Activated CD4-positive, alpha-beta T cell treated with anti-CD3 and anti-CD28 coated beads for 36 hours (primary cell): ENCODE measurements at regions of chr1 and their contacts with region 1.

Region 1: GRCh38 chr1:39609618-39610331 is 29.7 kb downstream of the HEYL start:
- DNase-seq: peak; percentile 92
- ATAC-seq: peak; percentile 92
- H3K4me3 Mint-ChIP-seq: no peak overlapping the region
- H3K27ac Mint-ChIP-seq: no peak overlapping the region
- H3K4me1 Mint-ChIP-seq: peaks cover 9% of the 10 kb centered on the region
- H3K27me3 Mint-ChIP-seq: no peaks in the 10 kb centered on the region

Region 2: DNA sequence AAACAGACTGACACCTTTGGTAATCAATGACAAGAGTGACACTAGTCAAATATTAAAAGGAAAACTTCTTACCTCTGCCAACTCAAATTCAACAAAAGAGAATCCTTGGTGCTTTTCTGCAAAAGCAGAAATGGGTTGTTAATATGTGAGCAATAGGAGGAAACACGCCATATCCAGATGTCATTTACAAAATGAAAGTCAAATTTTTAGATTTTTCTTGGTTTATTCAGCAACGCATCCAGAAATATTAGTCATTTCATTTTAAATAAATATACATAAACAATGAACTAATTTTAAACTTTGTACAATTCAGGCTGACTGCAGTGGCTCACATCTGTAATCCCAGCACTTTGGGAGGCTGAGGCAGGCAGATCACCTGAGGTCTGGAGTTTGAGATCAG is 55.5 kb before region 1 on chr1:
- CTCF ChIA-PET with region 1: no interaction called
- POLR2A ChIA-PET with region 1: no interaction called
- intact Hi-C with region 1: no loop called
- DNase-seq: no peak
- ATAC-seq: no peak
- H3K4me3 Mint-ChIP-seq: no peak overlapping the region
- H3K27ac Mint-ChIP-seq: no peak overlapping the region
- H3K4me1 Mint-ChIP-seq: peaks cover 7% of the 10 kb centered on the region
- H3K27me3 Mint-ChIP-seq: no peaks in the 10 kb centered on the region

Region 3: GRCh38 chr1:39575191-39576015 is 34.4 kb before region 1 on chr1:
- CTCF ChIA-PET with region 1: interaction called, 11 read pairs
- POLR2A ChIA-PET with region 1: interaction called, 6 read pairs
- intact Hi-C with region 1: no loop called
- DNase-seq: peak; percentile 69
- ATAC-seq: peak; percentile 40
- H3K4me3 Mint-ChIP-seq: peak overlapping the region; percentile 90
- H3K27ac Mint-ChIP-seq: peak overlapping the region; percentile 90
- H3K4me1 Mint-ChIP-seq: peaks cover 42% of the 10 kb centered on the region
- H3K27me3 Mint-ChIP-seq: no peaks in the 10 kb centered on the region

Region 4: GRCh38 chr1:39623053-39623452 is 13.3 kb after region 1 on chr1:
- CTCF ChIA-PET with region 1: interaction called, 11 read pairs
- POLR2A ChIA-PET with region 1: no interaction called
- intact Hi-C with region 1: no loop called
- DNase-seq: no peak
- ATAC-seq: no peak
- H3K4me3 Mint-ChIP-seq: no peak overlapping the region
- H3K27ac Mint-ChIP-seq: no peak overlapping the region
- H3K4me1 Mint-ChIP-seq: no peaks in the 10 kb centered on the region
- H3K27me3 Mint-ChIP-seq: peaks cover 5% of the 10 kb centered on the region

Region 5: DNA sequence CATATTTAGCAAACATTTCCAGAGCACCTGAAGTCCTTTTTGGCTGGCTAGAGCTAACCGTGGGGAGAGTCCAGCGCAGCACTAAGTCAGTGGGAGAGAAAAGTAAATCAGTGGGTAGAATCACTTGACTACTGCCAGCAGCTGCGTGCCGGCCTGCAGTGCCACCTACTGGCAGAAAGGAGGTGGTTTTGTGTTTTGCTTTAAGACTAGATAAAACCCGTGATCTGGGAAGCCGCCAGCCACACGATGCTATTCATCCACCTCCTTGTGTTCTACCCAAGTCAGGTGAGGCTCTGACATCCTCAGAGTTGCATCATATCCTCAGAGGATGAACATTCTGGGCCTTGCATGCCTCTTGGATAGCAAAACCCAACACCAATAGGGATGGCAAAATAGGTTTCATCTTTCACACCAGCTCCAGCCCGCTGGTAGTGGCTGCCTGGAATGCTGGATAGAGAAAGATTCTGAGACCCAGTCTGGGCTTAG is 43.8 kb after region 1 on chr1:
- CTCF ChIA-PET with region 1: interaction called, 339 read pairs
- POLR2A ChIA-PET with region 1: interaction called, 5 read pairs
- intact Hi-C with region 1: loop called (anchors 1 kb)
- DNase-seq: peak; percentile 89
- ATAC-seq: peak; percentile 82
- H3K4me3 Mint-ChIP-seq: no peak overlapping the region
- H3K27ac Mint-ChIP-seq: peak overlapping the region; percentile 26
- H3K4me1 Mint-ChIP-seq: peaks cover 8% of the 10 kb centered on the region
- H3K27me3 Mint-ChIP-seq: peaks cover 3% of the 10 kb centered on the region

Region 6: DNA sequence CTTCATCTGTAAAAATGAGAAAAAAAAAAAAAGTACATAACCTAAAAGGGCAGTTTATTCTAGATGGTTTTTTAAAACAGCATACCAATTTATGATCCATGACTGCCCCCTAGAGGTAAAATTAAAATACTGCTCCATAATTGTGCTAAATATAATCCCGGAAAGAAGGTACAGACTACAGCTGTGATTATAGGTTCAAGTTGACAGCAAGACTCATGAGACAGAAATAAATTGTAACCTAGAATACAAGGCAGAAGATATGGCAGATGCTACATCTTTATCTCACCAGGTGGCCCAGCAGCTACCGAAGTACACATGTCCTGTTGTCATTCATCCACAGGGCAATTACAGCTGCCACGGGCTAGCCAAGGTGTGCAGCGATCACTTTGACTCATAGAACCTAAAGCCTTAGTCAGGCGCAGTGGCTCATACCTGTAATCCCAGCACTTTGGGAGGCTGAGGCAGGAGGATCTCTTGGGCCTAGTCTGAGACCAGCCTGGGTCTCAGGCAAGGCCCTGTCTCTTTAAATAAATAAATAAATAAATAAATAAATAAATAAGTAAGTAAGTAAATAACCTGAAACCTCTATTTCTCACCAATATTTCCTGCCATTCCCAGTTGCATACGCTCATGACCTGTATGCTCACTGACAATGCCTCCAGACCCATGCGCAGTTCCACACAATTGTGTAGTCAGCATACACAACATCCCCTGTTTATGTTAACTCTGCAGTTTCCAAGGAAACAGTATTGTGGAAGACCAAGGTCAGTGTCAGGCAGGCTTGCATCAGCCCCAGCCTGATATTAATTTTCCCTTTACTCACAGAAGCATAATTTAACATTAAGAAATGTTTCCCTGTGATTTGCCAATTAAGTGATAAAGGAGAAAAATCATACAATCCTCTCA is 110.6 kb after region 1 on chr1:
- CTCF ChIA-PET with region 1: interaction called, 29 read pairs
- POLR2A ChIA-PET with region 1: no interaction called
- intact Hi-C with region 1: loop called (anchors 1 kb)
- DNase-seq: no peak
- ATAC-seq: peak; percentile 73
- H3K4me3 Mint-ChIP-seq: no peak overlapping the region
- H3K27ac Mint-ChIP-seq: no peak overlapping the region
- H3K4me1 Mint-ChIP-seq: no peaks in the 10 kb centered on the region
- H3K27me3 Mint-ChIP-seq: peaks cover 38% of the 10 kb centered on the region

Region 7: DNA sequence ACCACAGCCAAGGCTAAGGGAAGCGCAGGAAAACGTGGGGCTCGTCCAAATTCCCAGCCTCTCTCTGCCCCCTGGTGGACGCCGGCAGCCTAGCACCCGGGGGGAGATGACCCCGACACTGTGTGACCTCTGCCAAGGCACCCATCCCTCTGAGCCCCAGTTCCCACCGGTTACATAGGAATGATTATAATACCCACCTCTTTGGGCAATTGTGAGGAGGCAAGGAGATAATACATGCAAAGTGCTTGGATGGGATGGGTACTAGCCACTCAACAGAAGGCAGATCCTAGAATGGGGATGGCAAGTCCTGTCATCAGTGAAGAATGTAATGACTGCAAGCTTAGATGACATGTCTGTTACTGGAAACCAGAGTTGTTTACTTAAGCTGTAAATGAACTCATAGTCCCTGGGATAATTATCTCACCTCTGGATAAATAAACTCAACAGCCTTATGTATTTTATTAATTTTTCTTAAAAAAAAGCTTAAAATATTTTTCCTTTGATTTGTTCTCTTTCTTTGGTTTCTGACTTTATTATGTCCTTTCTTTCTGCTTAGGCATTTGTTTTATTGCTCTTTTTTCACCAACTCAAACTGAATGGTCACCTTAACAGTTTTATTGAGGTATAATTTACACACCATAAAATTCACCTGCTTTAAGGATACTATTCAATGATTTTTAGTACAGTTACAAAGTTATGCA is 190.1 kb after region 1 on chr1:
- CTCF ChIA-PET with region 1: interaction called, 9 read pairs
- POLR2A ChIA-PET with region 1: no interaction called
- intact Hi-C with region 1: loop called (anchors 1 to 10 kb)
- DNase-seq: peak; percentile 80
- ATAC-seq: peak; percentile 64
- H3K4me3 Mint-ChIP-seq: peak overlapping the region; percentile 32
- H3K27ac Mint-ChIP-seq: peak overlapping the region; percentile 77
- H3K4me1 Mint-ChIP-seq: peaks cover 15% of the 10 kb centered on the region
- H3K27me3 Mint-ChIP-seq: no peaks in the 10 kb centered on the region